Thyroid gland (tissue), 4 donors: ENCODE measurements at regions of chr16 and their contacts with region 1.

Region 1: DNA sequence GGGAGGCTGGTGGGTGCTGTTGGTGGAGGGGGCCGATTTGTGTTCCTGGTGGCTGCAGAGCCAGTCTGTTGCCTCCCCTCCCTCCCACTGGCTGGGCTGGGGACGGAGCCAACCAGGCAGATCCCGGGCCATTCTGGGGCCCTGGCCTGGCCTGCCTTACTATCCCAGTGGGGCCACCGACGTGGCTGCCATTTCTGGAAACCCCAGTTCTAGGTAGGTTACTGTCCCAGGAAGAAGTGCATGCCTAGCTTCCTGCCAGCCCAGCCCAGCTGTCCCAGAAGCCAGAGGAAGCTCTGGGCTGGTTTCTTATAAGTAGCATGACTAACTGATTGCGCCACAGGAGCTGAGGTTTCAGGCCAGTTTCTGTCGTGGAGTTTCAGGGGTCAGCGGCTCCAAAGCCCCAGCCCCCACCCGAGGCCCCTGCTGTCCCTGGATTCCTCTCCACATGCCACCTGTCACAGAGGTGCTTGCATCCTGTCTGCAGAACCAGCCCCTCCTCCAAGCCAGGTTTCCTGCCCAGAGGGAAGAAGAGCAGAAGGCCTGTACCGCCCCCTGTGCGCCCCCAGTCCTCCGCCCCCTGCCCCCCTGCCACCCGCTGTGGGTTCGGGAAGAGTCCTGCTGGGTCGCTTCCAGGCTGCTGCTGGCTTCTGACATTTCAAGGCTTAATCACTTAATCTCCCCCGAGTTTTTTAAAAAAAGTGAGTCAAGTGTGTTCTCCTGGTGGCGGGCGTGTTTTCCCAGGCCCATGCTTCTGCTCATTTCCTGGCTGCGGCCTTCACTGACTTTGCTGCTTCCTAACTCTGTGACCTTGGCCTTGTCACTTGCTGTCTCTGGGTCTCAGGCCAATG is 13.2 kb downstream of the IL4R start:
- DNase-seq: peak; percentile 87 to 88
- H3K4me3 ChIP-seq: peak overlapping the region in 1 of 3 donors; percentile 4
- H3K27ac ChIP-seq: peak overlapping the region; percentile 86 to 98 (median 97)
- H3K4me1 ChIP-seq: peaks cover 32 to 58% of the 10 kb centered on the region in 2 donors
- H3K27me3 ChIP-seq: no peaks in the 10 kb centered on the region
- CTCF ChIP-seq: peak in 1 of 6 experiments; percentile 29
- POLR2A ChIP-seq: peak in 1 of 2 donors; percentile 11

Region 2: DNA sequence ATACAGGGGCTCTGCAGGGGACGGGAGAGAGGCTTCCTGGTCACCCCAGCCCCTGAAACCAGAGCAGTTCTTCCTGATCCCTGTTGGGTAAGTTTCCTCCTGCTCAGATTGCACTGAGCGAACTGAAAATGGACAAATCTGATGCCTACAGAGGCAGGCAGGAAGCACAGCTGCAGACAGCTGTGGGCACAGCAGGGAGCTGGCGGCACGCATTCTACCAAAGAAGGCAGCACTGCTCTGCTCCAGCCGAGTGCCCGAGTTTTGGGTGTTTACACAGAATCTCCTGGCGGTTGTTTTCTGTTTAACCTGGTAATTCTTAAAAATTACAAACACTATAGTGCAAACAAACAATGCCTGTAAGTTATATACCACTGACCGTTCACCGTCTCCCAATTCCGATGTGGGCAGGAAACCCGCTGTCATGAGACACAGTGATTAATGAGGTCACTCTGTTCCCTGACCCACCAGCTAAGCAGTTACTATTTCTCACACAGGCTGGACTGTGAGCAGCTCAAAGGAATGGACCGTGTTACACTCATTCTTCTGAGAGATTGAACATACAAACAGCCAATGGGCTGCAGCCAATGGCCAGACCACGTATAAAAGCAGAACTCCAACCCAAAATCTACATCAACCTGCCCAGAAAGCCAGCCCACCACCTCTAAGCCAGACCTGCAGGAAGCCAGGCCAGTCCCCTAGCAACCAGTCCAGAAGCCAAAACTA is 83.9 kb before region 1 on chr16:
- intact Hi-C with region 1: loop called (anchors 5 kb)
- DNase-seq: peak in 1 of 2 donors; percentile 29
- H3K4me3 ChIP-seq: no peak overlapping the region
- H3K27ac ChIP-seq: peak overlapping the region in 2 of 3 donors; percentile 49 to 53
- H3K4me1 ChIP-seq: peaks cover 27 to 59% of the 10 kb centered on the region in 2 donors
- H3K27me3 ChIP-seq: no peaks in the 10 kb centered on the region
- CTCF ChIP-seq: no peak
- POLR2A ChIP-seq: no peak

Region 3: GRCh38 chr16:27346819-27347218 is 19.9 kb after region 1 on chr16:
- intact Hi-C with region 1: no loop called
- DNase-seq: no peak
- H3K4me3 ChIP-seq: no peak overlapping the region
- H3K27ac ChIP-seq: no peak overlapping the region
- H3K4me1 ChIP-seq: no peaks in the 10 kb centered on the region
- H3K27me3 ChIP-seq: no peaks in the 10 kb centered on the region
- CTCF ChIP-seq: no peak
- POLR2A ChIP-seq: no peak

Region 4: DNA sequence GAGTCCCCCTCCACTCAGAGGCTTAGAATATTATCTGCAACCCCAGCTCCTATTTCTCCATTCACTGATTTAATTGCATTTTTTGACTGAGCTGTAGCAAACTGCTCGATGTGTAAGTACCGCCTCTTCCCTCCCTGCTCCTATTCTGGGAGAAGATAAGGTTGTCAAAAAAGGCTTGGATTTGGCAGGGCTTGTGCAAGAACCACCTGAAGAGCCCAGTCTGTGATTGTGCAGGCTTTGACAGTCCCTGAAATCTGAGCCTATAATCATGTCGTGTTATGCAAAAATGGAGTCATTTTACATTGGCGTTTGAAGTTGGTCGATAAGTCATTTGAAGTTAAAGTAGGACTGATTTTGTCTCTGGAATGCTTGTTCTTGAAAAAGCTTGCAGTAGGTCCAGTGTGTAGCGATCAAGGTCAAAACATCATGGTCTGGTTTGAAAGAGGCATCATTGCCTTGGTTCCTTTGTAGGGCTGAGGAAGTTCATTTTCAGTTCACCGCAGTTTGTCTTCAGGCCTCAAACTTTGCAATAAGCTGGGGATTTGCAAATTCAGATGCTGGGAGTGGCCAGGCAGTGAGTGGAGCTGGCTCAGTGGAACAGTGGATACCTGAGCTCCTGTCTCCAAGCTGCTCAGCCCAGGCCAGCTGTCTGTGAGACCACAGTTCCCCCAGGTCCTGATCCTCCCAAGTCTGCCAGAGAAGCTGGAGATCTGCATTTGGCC is 291.8 kb after region 1 on chr16:
- intact Hi-C with region 1: no loop called
- DNase-seq: peak; percentile 35 to 54
- H3K4me3 ChIP-seq: no peak overlapping the region
- H3K27ac ChIP-seq: peak overlapping the region; percentile 86 to 94 (median 93)
- H3K4me1 ChIP-seq: peaks cover 39 to 56% of the 10 kb centered on the region in 2 donors
- H3K27me3 ChIP-seq: no peaks in the 10 kb centered on the region
- CTCF ChIP-seq: no peak
- POLR2A ChIP-seq: no peak